Activated CD4-positive, alpha-beta T cell treated with anti-CD3 and anti-CD28 coated beads for 36 hours (primary cell): ENCODE measurements at regions of chr12 and their contacts with region 1.

Region 1: GRCh38 chr12:30806989-30807694 is 52.4 kb upstream of the CAPRIN2 start:
- DNase-seq: peak; percentile 21
- ATAC-seq: peak; percentile 75
- H3K4me3 Mint-ChIP-seq: no peak overlapping the region
- H3K27ac Mint-ChIP-seq: no peak overlapping the region
- H3K4me1 Mint-ChIP-seq: no peaks in the 10 kb centered on the region
- H3K27me3 Mint-ChIP-seq: peaks cover 18% of the 10 kb centered on the region

Region 2: DNA sequence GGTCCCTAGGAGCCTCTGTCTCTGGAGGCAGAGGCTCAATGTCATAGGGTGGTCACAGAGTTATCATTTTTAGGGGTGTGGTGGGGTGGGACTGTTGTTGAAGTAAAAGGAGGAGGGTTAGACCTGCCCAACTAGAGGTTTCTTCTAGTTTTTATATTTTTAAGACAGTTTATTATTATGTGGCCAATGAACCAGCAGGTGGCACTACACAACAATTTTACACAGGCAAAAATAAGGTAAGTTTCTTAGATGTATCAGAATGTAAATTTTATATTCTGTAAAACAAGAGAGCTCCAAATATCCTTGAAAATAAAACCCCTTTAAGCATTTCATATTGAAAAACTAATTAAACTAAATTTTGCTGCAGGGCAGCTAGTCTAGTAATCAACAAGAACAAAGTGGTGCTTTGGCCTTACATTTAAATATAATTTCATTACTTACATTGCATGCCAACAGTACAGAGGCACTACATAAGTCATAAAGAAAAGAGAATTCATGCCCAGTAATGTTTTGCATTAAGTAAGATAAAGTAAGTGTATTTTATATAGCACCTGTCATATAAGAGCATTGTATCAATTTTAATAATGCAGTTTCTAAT is 1287.5 kb before region 1 on chr12:
- CTCF ChIA-PET with region 1: interaction called, 11 read pairs
- POLR2A ChIA-PET with region 1: no interaction called
- intact Hi-C with region 1: loop called (anchors 1 kb)
- DNase-seq: peak; percentile 39
- ATAC-seq: no peak
- H3K4me3 Mint-ChIP-seq: no peak overlapping the region
- H3K27ac Mint-ChIP-seq: no peak overlapping the region
- H3K4me1 Mint-ChIP-seq: no peaks in the 10 kb centered on the region
- H3K27me3 Mint-ChIP-seq: peaks cover 6% of the 10 kb centered on the region

Region 3: DNA sequence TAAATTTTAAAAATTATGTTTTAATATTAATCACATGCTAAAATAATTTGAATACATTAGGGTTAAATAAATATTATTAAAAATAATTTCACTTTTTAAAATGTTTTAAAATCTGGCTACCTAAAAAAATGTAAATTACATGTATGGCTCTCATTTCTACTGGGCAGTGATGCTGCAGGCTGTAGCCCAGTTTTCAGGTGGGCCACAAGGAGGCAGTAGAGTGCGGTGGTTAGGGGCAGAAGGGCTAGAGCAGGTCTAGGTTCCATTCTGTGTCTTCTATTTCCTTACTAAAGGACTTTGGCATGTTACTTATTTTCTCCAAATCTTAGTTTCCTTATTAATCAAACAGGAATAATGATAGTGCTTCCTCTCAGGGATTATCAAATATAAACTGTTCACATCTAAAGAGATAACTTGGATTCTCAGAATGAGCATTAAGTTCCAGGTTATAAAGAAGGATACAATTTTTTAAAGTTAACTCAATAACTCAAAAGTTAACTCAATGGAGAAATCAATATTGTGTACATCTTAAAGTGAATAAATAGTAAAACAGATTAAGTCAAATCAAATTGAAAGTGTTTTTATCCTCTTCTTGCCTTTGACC is 1254.7 kb before region 1 on chr12:
- CTCF ChIA-PET with region 1: interaction called, 6 read pairs
- POLR2A ChIA-PET with region 1: no interaction called
- intact Hi-C with region 1: loop called (anchors 1 to 10 kb)
- DNase-seq: peak; percentile 83
- ATAC-seq: peak; percentile 81
- H3K4me3 Mint-ChIP-seq: no peak overlapping the region
- H3K27ac Mint-ChIP-seq: no peak overlapping the region
- H3K4me1 Mint-ChIP-seq: no peaks in the 10 kb centered on the region
- H3K27me3 Mint-ChIP-seq: peaks cover 10% of the 10 kb centered on the region

Region 4: GRCh38 chr12:30695199-30696103 is 111.7 kb before region 1 on chr12 and contains the start of gene IPO8:
- CTCF ChIA-PET with region 1: no interaction called
- POLR2A ChIA-PET with region 1: no interaction called
- intact Hi-C with region 1: loop called in 1 of 2 experiments (anchors 5 kb)
- DNase-seq: peak; percentile 91
- ATAC-seq: peak; percentile 90
- H3K4me3 Mint-ChIP-seq: peak within 1 kb of the TSS; percentile 93
- H3K27ac Mint-ChIP-seq: peak within 1 kb of the TSS; percentile 95
- H3K4me1 Mint-ChIP-seq: peaks cover 37% of the 10 kb centered on the region
- H3K27me3 Mint-ChIP-seq: no peaks in the 10 kb centered on the region
- total RNA-seq, gene IPO8: 48.7 to 51.4 TPM

Region 5: DNA sequence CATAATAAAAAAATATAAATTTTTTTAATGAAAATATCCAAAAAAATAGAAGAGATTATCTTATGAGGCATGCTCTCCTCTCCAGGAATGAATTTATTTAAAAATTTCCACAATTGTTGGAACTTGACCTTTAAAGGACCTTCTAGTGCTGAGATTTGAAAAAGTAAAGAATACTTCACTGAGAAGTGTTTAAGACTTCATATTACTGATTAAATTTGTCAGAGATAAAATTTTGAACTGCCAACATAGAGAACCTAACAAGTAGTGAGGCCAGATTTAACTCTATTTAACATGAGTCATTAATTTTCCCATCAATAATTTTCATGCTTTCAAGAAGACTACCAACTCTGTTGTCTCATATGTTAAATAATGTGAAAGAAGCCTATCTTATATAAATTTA is 66.9 kb before region 1 on chr12:
- CTCF ChIA-PET with region 1: no interaction called
- POLR2A ChIA-PET with region 1: no interaction called
- intact Hi-C with region 1: no loop called
- DNase-seq: no peak
- ATAC-seq: no peak
- H3K4me3 Mint-ChIP-seq: no peak overlapping the region
- H3K27ac Mint-ChIP-seq: no peak overlapping the region
- H3K4me1 Mint-ChIP-seq: no peaks in the 10 kb centered on the region
- H3K27me3 Mint-ChIP-seq: no peaks in the 10 kb centered on the region

Region 6: GRCh38 chr12:30754709-30755394 is 52.3 kb before region 1 on chr12 and contains the start of gene CAPRIN2:
- CTCF ChIA-PET with region 1: interaction called, 17 read pairs
- POLR2A ChIA-PET with region 1: no interaction called
- intact Hi-C with region 1: loop called in 1 of 2 experiments (anchors 2 kb)
- DNase-seq: peak; percentile 96
- ATAC-seq: peak; percentile 94
- H3K4me3 Mint-ChIP-seq: peak within 1 kb of the TSS; percentile 86
- H3K27ac Mint-ChIP-seq: peak within 1 kb of the TSS; percentile 78
- H3K4me1 Mint-ChIP-seq: peaks cover 36% of the 10 kb centered on the region
- H3K27me3 Mint-ChIP-seq: no peaks in the 10 kb centered on the region
- total RNA-seq, gene CAPRIN2: 10.0 to 19.8 TPM

Region 7: GRCh38 chr12:31267966-31268365 is 460.8 kb after region 1 on chr12:
- CTCF ChIA-PET with region 1: no interaction called
- POLR2A ChIA-PET with region 1: no interaction called
- intact Hi-C with region 1: no loop called
- DNase-seq: no peak
- ATAC-seq: no peak
- H3K4me3 Mint-ChIP-seq: no peak overlapping the region
- H3K27ac Mint-ChIP-seq: no peak overlapping the region
- H3K4me1 Mint-ChIP-seq: no peaks in the 10 kb centered on the region
- H3K27me3 Mint-ChIP-seq: no peaks in the 10 kb centered on the region